PC-3 (cell line): ENCODE measurements at regions of chr14 and their contacts with region 1.

Region 1: DNA sequence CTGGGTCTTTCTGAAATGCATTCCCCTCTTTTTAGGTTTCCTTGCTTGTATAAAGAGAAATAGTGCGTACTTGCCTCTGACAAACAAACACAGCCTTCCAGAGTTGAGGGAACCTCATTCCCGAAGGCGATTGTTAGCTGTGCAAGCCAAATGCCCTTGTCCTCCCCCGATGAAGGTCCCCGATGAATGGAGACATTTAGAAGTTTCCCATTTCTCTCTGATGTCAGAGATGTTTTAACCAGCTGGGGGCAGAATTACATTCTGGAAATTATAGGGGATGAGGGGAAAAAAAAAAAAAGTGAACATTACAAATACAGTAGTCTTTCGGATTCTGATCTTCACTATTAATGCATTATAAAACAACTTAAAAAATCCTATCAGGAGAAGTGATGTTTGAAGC is 366.8 kb downstream of the VRK1 start:
- DNase-seq: peak; percentile 50
- ATAC-seq: peak; percentile 55
- H3K4me3 ChIP-seq: peak overlapping the region; percentile 52
- H3K27ac ChIP-seq: peak overlapping the region; percentile 63
- H3K4me1 ChIP-seq: peaks cover 19% of the 10 kb centered on the region
- H3K27me3 ChIP-seq: no peaks in the 10 kb centered on the region
- CTCF ChIP-seq: peak; percentile 53

Region 2: DNA sequence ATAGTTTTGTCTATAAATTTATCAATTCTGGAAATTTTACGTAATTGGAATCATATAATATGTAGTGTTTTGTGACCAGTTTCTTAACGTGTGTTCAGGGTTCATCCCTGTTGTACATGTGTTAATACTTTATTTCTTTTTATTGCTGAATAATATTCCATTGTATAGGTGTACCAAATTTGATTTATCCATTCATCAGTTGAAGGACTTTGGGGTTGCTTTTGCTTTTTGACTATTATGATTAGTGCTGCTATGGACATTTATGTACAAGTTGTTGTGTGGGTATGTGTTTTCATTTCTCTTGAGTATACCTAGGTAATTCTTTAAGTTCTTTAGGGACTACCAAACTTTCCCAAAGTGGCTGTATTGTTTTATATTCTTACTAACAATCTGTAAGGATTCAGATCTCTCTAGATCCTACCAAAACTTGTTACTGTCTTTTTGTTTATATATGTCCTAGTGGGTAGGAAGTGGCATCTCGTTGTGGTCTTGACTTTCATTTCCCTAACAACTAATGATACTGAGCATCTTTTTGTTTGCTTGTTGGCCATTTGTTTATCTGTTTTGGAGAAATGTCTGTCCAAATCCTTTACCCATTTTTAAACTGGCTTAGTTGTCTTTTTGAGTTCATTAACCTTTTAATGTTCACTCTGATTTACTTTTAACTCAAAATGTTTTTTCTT is 351.9 kb before region 1 on chr14:
- CTCF ChIA-PET with region 1: no interaction called
- POLR2A ChIA-PET with region 1: no interaction called
- intact Hi-C with region 1: loop called (anchors 10 kb)
- DNase-seq: no peak
- ATAC-seq: no peak
- H3K4me3 ChIP-seq: no peak overlapping the region
- H3K27ac ChIP-seq: peak overlapping the region; percentile 26
- H3K4me1 ChIP-seq: peaks cover 15% of the 10 kb centered on the region; the same call in 1 of the 2 replicates
- H3K27me3 ChIP-seq: no peaks in the 10 kb centered on the region
- CTCF ChIP-seq: no peak

Region 3: GRCh38 chr14:96901227-96901626 is 262.8 kb before region 1 on chr14:
- CTCF ChIA-PET with region 1: no interaction called
- POLR2A ChIA-PET with region 1: no interaction called
- intact Hi-C with region 1: loop called (anchors 5 kb)
- DNase-seq: no peak
- ATAC-seq: no peak
- H3K4me3 ChIP-seq: no peak overlapping the region
- H3K27ac ChIP-seq: no peak overlapping the region
- H3K4me1 ChIP-seq: peaks cover 28% of the 10 kb centered on the region
- H3K27me3 ChIP-seq: no peaks in the 10 kb centered on the region
- CTCF ChIP-seq: no peak

Region 4: DNA sequence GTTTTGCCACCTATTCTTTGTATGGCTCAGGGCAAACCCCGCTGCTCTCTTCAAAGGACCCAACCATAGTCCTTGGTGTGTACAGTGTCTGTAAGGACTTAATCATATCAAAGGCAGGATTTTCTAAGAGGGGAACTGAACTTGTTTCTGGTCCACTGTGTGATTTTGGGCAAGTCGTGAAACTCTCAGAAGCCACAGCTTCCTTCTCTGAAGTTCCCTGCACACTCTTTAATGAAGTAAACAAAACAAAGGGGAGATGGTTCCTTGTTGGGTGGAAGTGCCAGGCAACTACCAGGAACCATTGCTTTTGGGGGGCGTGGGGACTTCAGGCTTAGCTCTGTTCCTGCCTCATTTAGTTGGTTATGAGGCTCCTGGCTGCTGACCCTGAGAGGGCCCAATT is 214.4 kb before region 1 on chr14:
- CTCF ChIA-PET with region 1: no interaction called
- POLR2A ChIA-PET with region 1: interaction called, 12 read pairs
- intact Hi-C with region 1: no loop called
- DNase-seq: no peak
- ATAC-seq: no peak
- H3K4me3 ChIP-seq: no peak overlapping the region
- H3K27ac ChIP-seq: no peak overlapping the region
- H3K4me1 ChIP-seq: no peaks in the 10 kb centered on the region
- H3K27me3 ChIP-seq: no peaks in the 10 kb centered on the region
- CTCF ChIP-seq: no peak

Region 5: DNA sequence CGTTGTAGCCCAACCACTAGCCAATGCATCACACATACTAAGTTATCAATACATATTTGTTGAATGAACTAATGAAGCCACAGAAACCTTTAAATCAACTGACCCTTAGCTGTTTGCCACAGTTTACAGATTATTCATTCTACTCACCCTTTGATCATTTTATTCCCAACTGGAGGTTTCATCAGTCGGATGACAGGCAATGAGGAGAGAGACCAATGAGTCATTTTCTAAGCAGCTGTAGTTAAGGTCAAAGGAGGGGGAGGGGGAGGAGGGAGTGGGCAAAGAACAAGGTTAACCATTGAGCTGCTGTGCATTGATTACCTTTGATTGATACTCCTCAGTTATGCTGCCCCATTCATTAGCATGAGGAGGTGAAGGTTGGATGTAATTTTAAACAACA is 102.6 kb after region 1 on chr14:
- CTCF ChIA-PET with region 1: no interaction called
- POLR2A ChIA-PET with region 1: interaction called, 12 read pairs
- intact Hi-C with region 1: no loop called
- DNase-seq: peak; percentile 92
- ATAC-seq: peak; percentile 26
- H3K4me3 ChIP-seq: no peak overlapping the region
- H3K27ac ChIP-seq: peak overlapping the region; percentile 87
- H3K4me1 ChIP-seq: peaks cover 49% of the 10 kb centered on the region
- H3K27me3 ChIP-seq: no peaks in the 10 kb centered on the region
- CTCF ChIP-seq: no peak